ENCODE measurements at regions of chr17 and their contacts with region 1.

Region 1: GRCh38 chr17:27601069-27601975 is 29.7 kb upstream of the LGALS9 start:
- DNase-seq: peak; percentile 65 to 89 (median 80)
- ATAC-seq: peak; percentile 61
- H3K4me3 ChIP-seq: no peak overlapping the region
- H3K4me3 Mint-ChIP-seq: no peak overlapping the region
- H3K27ac ChIP-seq: no peak overlapping the region
- H3K27ac Mint-ChIP-seq: no peak overlapping the region
- H3K4me1 ChIP-seq: peaks cover 6% of the 10 kb centered on the region
- H3K4me1 Mint-ChIP-seq: peaks cover 4% of the 10 kb centered on the region
- H3K27me3 ChIP-seq: no peaks in the 10 kb centered on the region
- H3K27me3 Mint-ChIP-seq: no peaks in the 10 kb centered on the region
- CTCF ChIP-seq: peak; percentile 90

Region 2: DNA sequence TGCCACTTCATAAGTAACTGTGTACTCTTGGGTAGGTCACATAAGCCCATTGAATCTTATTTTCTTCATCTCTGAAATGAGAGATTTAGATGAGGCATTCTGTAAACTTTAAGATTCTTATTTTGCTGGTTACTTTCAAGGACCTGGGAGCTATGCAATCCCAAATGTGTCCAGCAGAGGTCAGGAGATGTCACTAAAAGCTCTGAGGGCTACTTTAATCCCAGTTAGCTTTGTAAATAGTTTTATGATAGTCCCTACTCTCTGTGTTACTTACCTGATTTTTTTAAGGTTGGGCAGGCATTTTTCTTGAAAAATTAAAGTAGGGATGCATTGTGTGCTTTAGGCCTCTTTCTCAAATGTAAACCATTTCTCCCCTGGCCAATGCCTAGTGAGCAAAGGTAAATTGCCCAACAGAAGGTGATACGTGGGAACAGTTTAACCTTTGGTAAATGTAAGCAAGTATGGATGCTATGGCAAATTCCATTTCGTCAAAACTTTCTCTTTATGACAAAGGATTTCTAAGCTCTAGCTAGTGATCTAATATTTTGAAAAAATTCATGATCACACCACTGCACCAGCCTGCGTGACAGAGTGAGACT is 364.5 kb before region 1 on chr17:
- CTCF ChIA-PET with region 1: interaction called, 21 read pairs
- POLR2A ChIA-PET with region 1: interaction called, 13 read pairs
- intact Hi-C with region 1: loop called (anchors 1 kb)
- DNase-seq: peak; percentile 55 to 87 (median 70)
- ATAC-seq: peak; percentile 91
- H3K4me3 ChIP-seq: no peak overlapping the region
- H3K4me3 Mint-ChIP-seq: no peak overlapping the region
- H3K27ac ChIP-seq: no peak overlapping the region
- H3K27ac Mint-ChIP-seq: no peak overlapping the region
- H3K4me1 ChIP-seq: no peaks in the 10 kb centered on the region
- H3K4me1 Mint-ChIP-seq: no peaks in the 10 kb centered on the region
- H3K27me3 ChIP-seq: no peaks in the 10 kb centered on the region
- H3K27me3 Mint-ChIP-seq: no peaks in the 10 kb centered on the region
- CTCF ChIP-seq: peak; percentile 78

Region 3: GRCh38 chr17:27245230-27245696 is 356.1 kb before region 1 on chr17:
- CTCF ChIA-PET with region 1: interaction called, 6 read pairs
- POLR2A ChIA-PET with region 1: no interaction called
- intact Hi-C with region 1: loop called in 1 of 2 experiments (anchors 2 kb)
- DNase-seq: peak; percentile 5 to 69 (median 30)
- ATAC-seq: peak; percentile 77
- H3K4me3 ChIP-seq: no peak overlapping the region
- H3K4me3 Mint-ChIP-seq: no peak overlapping the region
- H3K27ac ChIP-seq: no peak overlapping the region
- H3K27ac Mint-ChIP-seq: no peak overlapping the region
- H3K4me1 ChIP-seq: peaks cover 2% of the 10 kb centered on the region
- H3K4me1 Mint-ChIP-seq: no peaks in the 10 kb centered on the region
- H3K27me3 ChIP-seq: no peaks in the 10 kb centered on the region
- H3K27me3 Mint-ChIP-seq: peaks cover 10% of the 10 kb centered on the region
- CTCF ChIP-seq: peak; percentile 46

Region 4: GRCh38 chr17:27407916-27408846 is 193.1 kb before region 1 on chr17:
- CTCF ChIA-PET with region 1: interaction called, 10 read pairs
- POLR2A ChIA-PET with region 1: no interaction called
- intact Hi-C with region 1: no loop called
- DNase-seq: no peak
- ATAC-seq: no peak
- H3K4me3 ChIP-seq: no peak overlapping the region
- H3K4me3 Mint-ChIP-seq: no peak overlapping the region
- H3K27ac ChIP-seq: no peak overlapping the region
- H3K27ac Mint-ChIP-seq: no peak overlapping the region
- H3K4me1 ChIP-seq: no peaks in the 10 kb centered on the region
- H3K4me1 Mint-ChIP-seq: no peaks in the 10 kb centered on the region
- H3K27me3 ChIP-seq: no peaks in the 10 kb centered on the region
- H3K27me3 Mint-ChIP-seq: no peaks in the 10 kb centered on the region
- CTCF ChIP-seq: no peak

Region 5: GRCh38 chr17:27654654-27655524 is 53.6 kb after region 1 on chr17:
- CTCF ChIA-PET with region 1: interaction called, 9 read pairs
- POLR2A ChIA-PET with region 1: no interaction called
- intact Hi-C with region 1: loop called (anchors 1 kb)
- DNase-seq: peak; percentile 40 to 81 (median 55)
- ATAC-seq: peak; percentile 69
- H3K4me3 ChIP-seq: no peak overlapping the region
- H3K4me3 Mint-ChIP-seq: no peak overlapping the region
- H3K27ac ChIP-seq: no peak overlapping the region
- H3K27ac Mint-ChIP-seq: no peak overlapping the region
- H3K4me1 ChIP-seq: peaks cover 9% of the 10 kb centered on the region
- H3K4me1 Mint-ChIP-seq: peaks cover 9% of the 10 kb centered on the region
- H3K27me3 ChIP-seq: no peaks in the 10 kb centered on the region
- H3K27me3 Mint-ChIP-seq: peaks cover 5% of the 10 kb centered on the region
- CTCF ChIP-seq: peak; percentile 97

Region 6: DNA sequence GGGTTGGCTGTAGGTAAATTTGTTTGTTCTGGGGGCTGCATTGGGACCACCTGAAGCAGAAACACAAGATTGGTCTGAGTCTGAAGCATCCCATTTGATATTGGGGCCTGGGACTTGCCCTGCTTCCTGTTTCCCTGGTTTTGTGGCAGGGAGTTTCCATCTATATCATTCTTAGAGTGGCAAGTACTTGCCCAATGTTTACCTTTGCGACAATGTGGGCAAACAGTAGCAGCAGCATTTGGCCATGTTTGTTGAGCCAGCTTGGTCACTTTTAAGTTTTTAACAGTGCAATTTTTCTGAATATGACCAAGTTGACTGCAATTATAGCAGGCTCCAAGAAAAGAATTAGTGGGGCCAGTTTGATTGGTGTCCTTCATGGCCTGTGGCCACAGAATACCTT is 91.4 kb after region 1 on chr17:
- CTCF ChIA-PET with region 1: no interaction called
- POLR2A ChIA-PET with region 1: no interaction called
- intact Hi-C with region 1: no loop called
- DNase-seq: no peak
- ATAC-seq: no peak
- H3K4me3 ChIP-seq: no peak overlapping the region
- H3K4me3 Mint-ChIP-seq: no peak overlapping the region
- H3K27ac ChIP-seq: no peak overlapping the region
- H3K27ac Mint-ChIP-seq: no peak overlapping the region
- H3K4me1 ChIP-seq: no peaks in the 10 kb centered on the region
- H3K4me1 Mint-ChIP-seq: no peaks in the 10 kb centered on the region
- H3K27me3 ChIP-seq: no peaks in the 10 kb centered on the region
- H3K27me3 Mint-ChIP-seq: peaks cover 10% of the 10 kb centered on the region
- CTCF ChIP-seq: no peak

Measured in CD4-positive, alpha-beta T cell (primary cell).